A549 (cell line): ENCODE measurements at regions of chr1 and their contacts with region 1.

Region 1: GRCh38 chr1:19113697-19114092 is 96.4 kb downstream of the UBR4 start:
- DNase-seq: peak; percentile 58 to 59
- ATAC-seq: peak; percentile 87 to 92
- H3K4me3 ChIP-seq: no peak overlapping the region
- H3K27ac ChIP-seq: no peak overlapping the region
- H3K4me1 ChIP-seq: no peaks in the 10 kb centered on the region
- CTCF ChIP-seq: peak; percentile 51
- EP300 ChIP-seq: no peak
- POLR2A ChIP-seq: no peak
- RAD21 ChIP-seq: peak; percentile 44 to 54; a peak in 4 of 5 replicates

Region 2: DNA sequence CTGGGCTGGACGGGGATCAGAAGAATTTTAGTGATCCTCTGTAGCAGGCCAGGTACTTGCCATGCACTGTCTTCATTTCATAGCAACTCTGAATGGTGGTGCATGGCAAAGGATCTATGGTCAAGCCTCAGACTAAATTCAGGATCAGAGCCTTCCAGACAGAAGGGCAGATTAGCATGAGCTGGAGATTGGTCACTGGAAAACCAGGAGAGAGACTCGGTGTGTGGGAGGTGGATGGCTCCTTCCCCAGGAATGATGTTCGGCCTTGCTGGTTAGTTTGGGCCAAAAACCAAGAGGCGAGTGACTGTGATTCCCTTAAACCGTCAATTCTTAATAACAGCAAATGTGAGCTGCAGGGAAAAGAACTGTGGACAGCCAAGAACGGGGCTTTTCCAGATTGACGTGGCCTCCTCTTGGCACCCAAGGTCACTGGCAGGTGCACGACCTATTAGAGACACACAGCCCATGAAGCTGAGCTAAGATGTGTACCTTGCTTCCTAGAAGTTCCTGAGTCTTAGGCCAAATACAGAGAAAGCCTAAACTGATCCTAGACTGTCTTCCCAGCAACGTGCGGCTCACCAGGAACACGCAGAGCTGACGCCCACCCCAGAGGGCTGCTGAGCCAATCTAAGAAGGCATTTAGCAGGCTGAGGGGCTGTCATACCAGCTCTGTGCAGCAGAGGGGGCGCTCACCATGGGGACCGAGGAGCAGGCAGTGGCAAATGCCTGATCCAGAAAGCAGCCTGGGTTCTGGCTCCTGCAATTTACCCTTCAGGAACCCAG is 229.9 kb before region 1 on chr1:
- CTCF ChIA-PET with region 1: interaction called, 30 read pairs
- POLR2A ChIA-PET with region 1: no interaction called
- DNase-seq: peak; percentile 50 to 61
- ATAC-seq: peak; percentile 73 to 90
- H3K4me3 ChIP-seq: no peak overlapping the region
- H3K27ac ChIP-seq: no peak overlapping the region; a peak in 1 of 6 replicates
- H3K4me1 ChIP-seq: peaks cover 9% of the 10 kb centered on the region; the same call in 2 of the 3 replicates
- CTCF ChIP-seq: peak; percentile 63
- EP300 ChIP-seq: no peak
- POLR2A ChIP-seq: no peak
- RAD21 ChIP-seq: peak; percentile 77 to 81